ENCODE measurements at regions of chr11 and their contacts with region 1.

Region 1: DNA sequence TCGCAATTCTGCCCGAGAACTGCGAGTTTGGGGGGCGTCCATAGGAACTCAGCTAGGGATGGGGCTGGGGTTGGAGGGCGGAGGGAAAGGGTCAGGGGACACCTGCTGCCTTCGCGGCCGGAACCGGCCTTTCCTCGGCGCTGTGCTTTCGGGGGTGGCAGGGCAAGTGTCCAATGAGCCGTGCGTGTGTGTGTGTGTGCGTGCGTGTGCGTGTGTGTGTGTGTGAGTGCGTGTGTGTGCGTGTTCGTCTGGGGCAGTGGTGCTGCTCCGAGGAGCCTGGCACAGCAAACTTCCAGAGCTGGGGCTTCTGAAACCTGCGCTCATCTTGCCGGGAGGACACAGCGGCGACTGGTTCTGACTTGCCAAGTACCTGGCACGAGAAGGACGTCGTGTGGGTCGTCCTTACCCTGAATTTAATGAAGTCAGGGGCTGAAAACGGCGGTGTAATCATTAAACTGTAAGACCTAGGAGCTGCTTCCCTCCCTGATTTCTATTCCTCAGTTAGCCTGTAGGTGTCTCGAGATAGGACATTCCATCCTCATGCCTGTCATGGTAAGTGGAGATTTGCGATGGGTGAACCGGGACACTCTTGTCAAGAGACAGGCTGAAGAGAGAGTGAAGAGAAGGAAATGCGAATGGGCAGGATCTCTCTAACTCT is 27.0 kb upstream of the AMOTL1 start:
- DNase-seq: peak; percentile 74
- H3K4me3 ChIP-seq: peak overlapping the region; percentile 51 to 70 (median 58)
- H3K27ac ChIP-seq: peak overlapping the region; percentile 76 to 83 (median 80)
- H3K4me1 ChIP-seq: peaks cover 0 to 48% (median 39%) of the 10 kb centered on the region in 4 donors
- H3K27me3 ChIP-seq: no peaks in the 10 kb centered on the region
- CTCF ChIP-seq: peak; percentile 36 to 58 (median 56)
- EP300 ChIP-seq: no peak
- POLR2A ChIP-seq: no peak

Region 2: GRCh38 chr11:94623120-94623735 is 117.9 kb before region 1 on chr11:
- intact Hi-C with region 1: loop called (anchors 5 kb)
- DNase-seq: no peak
- H3K4me3 ChIP-seq: no peak overlapping the region
- H3K27ac ChIP-seq: no peak overlapping the region
- H3K4me1 ChIP-seq: peaks cover 0 to 5% (median 0%) of the 10 kb centered on the region in 4 donors
- H3K27me3 ChIP-seq: no peaks in the 10 kb centered on the region
- CTCF ChIP-seq: peak; percentile 74 to 90 (median 76)
- EP300 ChIP-seq: no peak
- POLR2A ChIP-seq: no peak

Region 3: GRCh38 chr11:94650756-94651155 is 90.4 kb before region 1 on chr11:
- intact Hi-C with region 1: no loop called
- DNase-seq: peak; percentile 77
- H3K4me3 ChIP-seq: no peak overlapping the region
- H3K27ac ChIP-seq: peak overlapping the region in 2 of 4 donors; percentile 6 to 17
- H3K4me1 ChIP-seq: no peaks in the 10 kb centered on the region
- H3K27me3 ChIP-seq: no peaks in the 10 kb centered on the region
- CTCF ChIP-seq: no peak
- EP300 ChIP-seq: no peak
- POLR2A ChIP-seq: no peak

Region 4: DNA sequence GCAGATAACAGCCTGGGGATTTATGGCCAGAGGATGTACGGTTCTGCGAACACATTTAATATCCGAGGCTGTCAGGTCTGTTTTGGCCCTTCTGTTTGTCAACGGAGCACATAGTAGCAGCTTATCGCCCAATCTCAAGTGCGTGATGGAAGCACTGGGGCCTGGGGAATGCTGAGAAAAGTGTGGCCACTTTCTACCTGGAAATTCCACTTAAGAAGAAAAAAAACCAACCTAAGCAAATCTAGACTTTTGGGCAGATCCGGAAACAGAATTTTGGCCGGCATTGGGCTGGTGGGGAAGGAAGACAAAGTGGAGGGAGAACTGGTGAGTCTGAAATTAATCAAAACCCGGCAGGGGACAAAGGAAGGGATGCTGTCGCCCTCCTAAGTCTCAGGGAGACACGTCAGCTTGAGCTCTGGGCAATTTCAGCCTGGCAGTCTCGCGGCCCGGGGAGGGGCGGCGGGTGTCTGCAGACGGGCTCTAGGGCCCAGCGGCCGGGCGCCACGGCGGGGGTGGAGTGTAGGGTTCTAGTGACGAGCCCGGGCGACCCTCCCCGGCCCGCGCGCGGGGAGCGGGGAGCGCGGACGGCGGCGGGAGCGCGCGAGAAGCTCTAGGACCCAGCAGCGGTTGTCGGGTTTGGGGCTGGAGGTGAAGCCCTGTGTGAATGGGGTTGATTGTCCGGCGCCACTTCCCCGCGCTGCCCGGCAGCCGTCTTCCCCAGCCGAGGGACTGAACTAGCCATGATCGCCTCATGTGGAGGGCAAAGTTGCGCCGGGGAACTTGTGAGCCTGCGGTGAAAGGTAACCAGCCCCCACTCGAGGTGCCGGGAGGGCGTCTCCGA is 26.8 kb after region 1 on chr11 and contains the start of gene AMOTL1:
- intact Hi-C with region 1: loop called (anchors 2 kb)
- DNase-seq: peak; percentile 96
- H3K4me3 ChIP-seq: peak within 1 kb of the TSS; percentile 84 to 95 (median 91)
- H3K27ac ChIP-seq: peak within 1 kb of the TSS; percentile 97 to 99 (median 98)
- H3K4me1 ChIP-seq: peaks cover 0 to 77% (median 59%) of the 10 kb centered on the region in 4 donors
- H3K27me3 ChIP-seq: no peaks in the 10 kb centered on the region
- CTCF ChIP-seq: no peak
- EP300 ChIP-seq: peak in 2 of 4 donors; percentile 7 to 61
- POLR2A ChIP-seq: peak in 1 of 2 donors; percentile 74
- total RNA-seq, gene AMOTL1: 96.3 to 161 (median 115) TPM

Region 5: DNA sequence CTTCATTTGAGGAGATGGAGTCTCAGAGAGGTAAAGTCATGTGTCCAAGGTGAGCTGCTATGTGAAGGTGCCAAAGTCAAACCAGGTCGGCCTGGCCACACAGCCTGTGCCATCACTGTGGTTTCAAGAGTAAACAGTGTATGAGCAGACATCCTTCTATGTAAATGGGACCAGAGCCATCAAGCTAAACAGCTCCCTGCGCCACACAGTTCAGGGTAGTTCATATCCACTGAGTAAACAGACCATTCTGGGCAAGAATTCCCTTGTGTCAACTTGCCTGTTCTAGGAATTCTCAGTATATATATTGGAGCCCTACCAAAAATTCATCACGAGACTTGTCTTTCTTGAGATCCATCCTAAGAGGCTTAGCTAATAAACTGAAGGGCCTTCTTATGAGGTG is 104.5 kb after region 1 on chr11:
- intact Hi-C with region 1: loop called (anchors 5 kb)
- DNase-seq: peak; percentile 74
- H3K4me3 ChIP-seq: no peak overlapping the region
- H3K27ac ChIP-seq: peak overlapping the region; percentile 65 to 79 (median 74)
- H3K4me1 ChIP-seq: peaks cover 0 to 65% (median 37%) of the 10 kb centered on the region in 4 donors
- H3K27me3 ChIP-seq: no peaks in the 10 kb centered on the region
- CTCF ChIP-seq: no peak
- EP300 ChIP-seq: peak in 3 of 4 donors; percentile 52 to 81 (median 69)
- POLR2A ChIP-seq: no peak

Region 6: DNA sequence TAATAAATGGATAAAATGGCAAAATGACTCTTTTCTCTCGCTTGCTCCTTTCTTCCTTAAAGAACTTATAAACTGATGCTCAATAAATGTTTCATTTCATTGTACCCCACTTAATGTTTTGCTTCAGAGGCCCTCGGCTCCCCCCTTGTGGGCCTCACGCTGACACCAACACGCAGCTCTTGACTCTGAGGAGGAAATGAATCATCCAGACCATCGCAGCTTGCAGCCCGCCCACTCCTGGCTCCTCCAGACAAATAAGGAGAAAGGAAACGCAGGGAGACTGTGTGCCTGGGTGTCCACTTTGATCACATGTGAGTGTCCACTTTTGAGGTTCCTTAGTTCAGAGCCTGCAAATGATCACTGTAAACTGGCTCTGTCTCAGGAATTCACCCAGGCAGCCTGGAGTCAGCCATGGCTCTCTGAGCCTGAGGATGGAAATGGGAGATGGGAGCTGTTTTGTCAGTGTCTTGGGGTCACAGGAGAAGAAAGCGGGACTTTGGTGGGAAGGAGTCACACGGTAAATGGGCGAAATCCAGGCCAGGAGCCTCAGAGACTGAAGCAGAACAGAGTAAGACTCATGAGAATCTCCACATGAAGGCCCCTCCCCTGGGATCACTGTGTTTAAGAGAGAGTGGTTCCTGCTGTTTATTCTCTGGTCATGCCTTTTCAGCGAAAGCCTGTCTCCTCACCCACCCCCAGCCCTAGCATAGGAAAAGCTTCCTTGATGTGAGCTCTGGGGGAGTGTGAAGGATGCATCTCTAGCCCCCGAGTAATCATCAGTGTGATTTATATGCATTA is 135.7 kb after region 1 on chr11:
- intact Hi-C with region 1: loop called (anchors 1 kb)
- DNase-seq: peak; percentile 95
- H3K4me3 ChIP-seq: no peak overlapping the region
- H3K27ac ChIP-seq: peak overlapping the region; percentile 56 to 87 (median 72)
- H3K4me1 ChIP-seq: peaks cover 0 to 64% (median 49%) of the 10 kb centered on the region in 4 donors
- H3K27me3 ChIP-seq: no peaks in the 10 kb centered on the region
- CTCF ChIP-seq: peak in 2 of 4 experiments; percentile 12 to 23
- EP300 ChIP-seq: no peak
- POLR2A ChIP-seq: no peak

Region 7: GRCh38 chr11:94897330-94897768 is 156.2 kb after region 1 on chr11:
- intact Hi-C with region 1: loop called (anchors 5 kb)
- DNase-seq: peak; percentile 76
- H3K4me3 ChIP-seq: no peak overlapping the region
- H3K27ac ChIP-seq: no peak overlapping the region
- H3K4me1 ChIP-seq: peaks cover 0 to 9% (median 0%) of the 10 kb centered on the region in 4 donors
- H3K27me3 ChIP-seq: no peaks in the 10 kb centered on the region
- CTCF ChIP-seq: peak; percentile 29 to 86 (median 76)
- EP300 ChIP-seq: no peak
- POLR2A ChIP-seq: no peak

Measured in sigmoid colon (tissue), 7 donors.